B cell (primary cell): ENCODE measurements at regions of chr2 and their contacts with region 1.

Region 1: GRCh38 chr2:9782197-9782719 is 61.0 kb upstream of the TAF1B start:
- DNase-seq: no peak
- ATAC-seq: no peak
- H3K4me3 ChIP-seq: no peak overlapping the region
- H3K4me3 Mint-ChIP-seq: no peak overlapping the region
- H3K27ac ChIP-seq: peak overlapping the region in 1 of 2 donors; percentile 45
- H3K27ac Mint-ChIP-seq: no peak overlapping the region
- H3K4me1 ChIP-seq: peaks cover 13 to 15% of the 10 kb centered on the region in 2 donors
- H3K4me1 Mint-ChIP-seq: peaks cover 11% of the 10 kb centered on the region
- H3K27me3 ChIP-seq: no peaks in the 10 kb centered on the region
- H3K27me3 Mint-ChIP-seq: peaks cover 7% of the 10 kb centered on the region
- CTCF ChIP-seq: no peak

Region 2: DNA sequence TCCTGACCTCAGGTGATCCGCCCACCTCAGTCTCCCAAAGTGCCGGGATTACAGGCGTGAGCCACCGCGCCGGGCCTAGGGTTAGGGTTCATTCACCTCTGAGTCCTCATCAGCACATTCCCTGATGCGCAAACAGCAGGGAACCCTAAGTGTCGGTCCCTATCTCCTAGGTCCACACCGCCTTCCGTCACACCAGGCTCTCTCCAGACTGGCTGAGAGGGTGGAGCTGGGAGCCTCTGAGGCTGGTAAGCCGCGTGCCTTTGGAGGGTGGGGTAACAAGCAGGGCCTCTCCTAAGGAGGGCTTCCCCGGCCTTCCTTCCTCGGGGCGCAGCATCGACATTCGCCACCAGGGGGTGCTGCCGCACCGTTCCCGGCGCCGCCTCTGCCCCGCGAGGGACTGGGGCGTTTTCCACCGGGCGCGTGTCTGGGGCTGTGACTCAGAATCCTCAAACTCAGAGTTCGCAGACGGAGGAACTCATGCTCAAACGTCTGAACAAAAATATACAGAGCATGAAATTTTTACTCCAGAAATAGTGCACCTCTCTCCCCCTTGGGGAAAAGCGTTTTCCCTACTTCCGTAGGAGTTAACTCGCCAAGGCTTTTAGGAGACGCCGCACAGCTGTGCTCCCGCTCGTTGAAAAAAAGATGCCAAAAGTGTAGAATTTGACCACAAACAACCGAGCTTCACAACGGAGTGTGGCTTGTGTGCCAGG is 639.6 kb before region 1 on chr2:
- CTCF ChIA-PET with region 1: interaction called, 3 read pairs
- POLR2A ChIA-PET with region 1: no interaction called
- intact Hi-C with region 1: loop called (anchors 2 kb)
- DNase-seq: peak; percentile 71
- ATAC-seq: peak; percentile 87
- H3K4me3 ChIP-seq: peak overlapping the region in 2 of 5 experiments; percentile 1 to 30
- H3K4me3 Mint-ChIP-seq: peak overlapping the region; percentile 34
- H3K27ac ChIP-seq: no peak overlapping the region
- H3K27ac Mint-ChIP-seq: no peak overlapping the region
- H3K4me1 ChIP-seq: peaks cover 7 to 8% of the 10 kb centered on the region in 2 donors
- H3K4me1 Mint-ChIP-seq: peaks cover 5% of the 10 kb centered on the region
- H3K27me3 ChIP-seq: peaks cover 0 to 10% (median 0%) of the 10 kb centered on the region in 4 experiments
- H3K27me3 Mint-ChIP-seq: peaks cover 27% of the 10 kb centered on the region
- CTCF ChIP-seq: peak; percentile 95

Region 3: DNA sequence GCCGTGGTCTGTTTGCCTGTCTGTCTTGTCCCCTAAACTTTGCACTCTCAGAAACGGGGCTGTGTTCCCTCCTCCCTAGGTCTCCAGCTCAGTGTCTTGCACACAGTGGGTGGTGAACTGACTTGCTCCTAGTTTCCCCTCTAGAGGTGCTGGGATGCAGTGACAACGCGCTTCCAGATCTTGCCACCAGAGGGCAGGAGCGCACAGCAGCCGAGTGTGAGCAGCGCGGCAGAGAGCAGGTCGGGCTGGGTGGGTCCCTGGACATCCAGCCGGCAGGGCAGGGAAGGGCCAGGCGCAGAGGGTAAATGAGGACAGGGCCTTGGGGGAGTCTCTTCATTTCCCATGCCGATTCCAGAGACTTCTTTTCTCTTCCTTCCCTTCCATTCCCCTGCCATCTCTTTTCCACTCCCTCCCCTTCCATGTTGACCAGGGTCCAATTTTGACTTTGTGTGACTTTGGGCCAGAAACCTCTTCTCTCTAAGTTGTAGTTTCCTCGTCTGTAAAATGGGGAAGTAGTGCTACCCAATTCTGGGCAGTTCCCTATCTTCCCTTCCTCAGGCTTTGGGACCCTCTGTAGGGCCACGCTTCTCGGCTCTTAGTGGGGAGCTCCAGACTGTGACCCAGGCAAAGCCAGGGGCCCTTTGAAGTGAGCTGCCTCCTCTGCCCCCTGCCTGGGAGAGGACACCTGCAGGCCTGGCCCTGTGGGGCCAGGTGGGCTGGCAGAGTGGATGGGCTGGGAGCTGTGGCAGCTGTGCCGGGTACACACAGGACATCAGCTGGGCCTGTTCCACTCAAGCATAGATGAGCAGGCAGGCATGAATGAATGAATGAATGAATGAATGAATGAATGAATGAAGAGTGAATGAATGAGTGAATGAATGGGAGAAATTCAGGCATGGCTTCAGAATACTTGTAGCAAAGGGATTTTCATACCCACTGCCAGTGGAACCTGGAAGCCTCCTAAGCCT is 17.7 kb after region 1 on chr2:
- CTCF ChIA-PET with region 1: interaction called, 11 read pairs
- POLR2A ChIA-PET with region 1: no interaction called
- intact Hi-C with region 1: no loop called
- DNase-seq: peak; percentile 85
- ATAC-seq: peak; percentile 94
- H3K4me3 ChIP-seq: peak overlapping the region in 3 of 5 experiments; percentile 5 to 49 (median 21)
- H3K4me3 Mint-ChIP-seq: peak overlapping the region; percentile 59
- H3K27ac ChIP-seq: no peak overlapping the region
- H3K27ac Mint-ChIP-seq: peak overlapping the region; percentile 66
- H3K4me1 ChIP-seq: peaks cover 13 to 20% of the 10 kb centered on the region in 2 donors
- H3K4me1 Mint-ChIP-seq: peaks cover 23% of the 10 kb centered on the region
- H3K27me3 ChIP-seq: peaks cover 0 to 4% (median 2%) of the 10 kb centered on the region in 4 experiments
- H3K27me3 Mint-ChIP-seq: peaks cover 7% of the 10 kb centered on the region
- CTCF ChIP-seq: peak; percentile 96